Panc1 (cell line): ENCODE measurements at regions of chr7 and their contacts with region 1.

Region 1: GRCh38 chr7:130955565-130955919 is 221.5 kb upstream of the KLF14 start:
- DNase-seq: no peak
- ATAC-seq: no peak
- H3K4me3 ChIP-seq: no peak overlapping the region
- H3K27ac ChIP-seq: peak overlapping the region; percentile 56
- H3K4me1 ChIP-seq: peaks cover 63% of the 10 kb centered on the region
- H3K27me3 ChIP-seq: no peaks in the 10 kb centered on the region
- CTCF ChIP-seq: no peak

Region 2: GRCh38 chr7:130793855-130794618 is 161.5 kb before region 1 on chr7:
- CTCF ChIA-PET with region 1: no interaction called
- POLR2A ChIA-PET with region 1: no interaction called
- in situ Hi-C with region 1: no loop called
- intact Hi-C with region 1: no loop called
- DNase-seq: no peak
- ATAC-seq: no peak
- H3K4me3 ChIP-seq: peak overlapping the region in 1 of 2 experiments; percentile 17; a peak in 1 of 4 replicates
- H3K27ac ChIP-seq: no peak overlapping the region
- H3K4me1 ChIP-seq: no peaks in the 10 kb centered on the region
- H3K27me3 ChIP-seq: no peaks in the 10 kb centered on the region
- CTCF ChIP-seq: peak; percentile 32

Region 3: GRCh38 chr7:130996841-130997231 is 41.3 kb after region 1 on chr7:
- CTCF ChIA-PET with region 1: no interaction called
- POLR2A ChIA-PET with region 1: interaction called, 12 read pairs
- in situ Hi-C with region 1: no loop called
- intact Hi-C with region 1: no loop called
- DNase-seq: peak; percentile 48
- ATAC-seq: peak; percentile 87
- H3K4me3 ChIP-seq: peak overlapping the region in 1 of 2 experiments; percentile 37; a peak in 2 of 4 replicates
- H3K27ac ChIP-seq: peak overlapping the region; percentile 78
- H3K4me1 ChIP-seq: peaks cover 56% of the 10 kb centered on the region
- H3K27me3 ChIP-seq: no peaks in the 10 kb centered on the region
- CTCF ChIP-seq: no peak

Region 4: GRCh38 chr7:131090886-131091692 is 135.5 kb after region 1 on chr7:
- CTCF ChIA-PET with region 1: no interaction called
- POLR2A ChIA-PET with region 1: no interaction called
- in situ Hi-C with region 1: no loop called
- intact Hi-C with region 1: no loop called
- DNase-seq: no peak
- ATAC-seq: no peak
- H3K4me3 ChIP-seq: no peak overlapping the region
- H3K27ac ChIP-seq: no peak overlapping the region
- H3K4me1 ChIP-seq: no peaks in the 10 kb centered on the region
- H3K27me3 ChIP-seq: no peaks in the 10 kb centered on the region
- CTCF ChIP-seq: no peak